ENCODE measurements at regions of chr4 and their contacts with region 1.

Region 1: DNA sequence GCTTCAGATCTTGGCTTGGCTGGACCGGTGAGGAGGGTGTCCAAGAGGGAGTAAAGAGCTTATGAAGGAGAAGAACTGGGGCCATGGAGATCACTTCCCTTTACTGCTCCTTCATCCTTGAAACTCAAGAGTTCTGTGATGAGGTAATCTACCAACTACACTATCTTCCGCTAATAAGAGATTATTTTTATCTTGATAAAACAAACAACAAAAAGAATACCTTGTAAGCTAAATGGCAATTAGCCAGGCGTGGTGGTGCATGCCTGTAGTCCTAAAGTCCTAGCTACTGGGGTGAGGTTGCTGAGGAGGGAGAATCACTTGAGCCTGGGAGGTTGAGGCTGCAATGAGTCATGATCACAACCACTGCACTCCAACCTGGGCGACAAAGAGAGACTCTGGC is 47.4 kb downstream of the HAUS3 start:
- DNase-seq: no peak
- H3K4me3 ChIP-seq: no peak overlapping the region
- H3K27ac ChIP-seq: no peak overlapping the region
- H3K4me1 ChIP-seq: no peaks in the 10 kb centered on the region
- H3K27me3 ChIP-seq: no peaks in the 10 kb centered on the region
- CTCF ChIP-seq: no peak

Region 2: GRCh38 chr4:1604711-1605205 is 589.7 kb before region 1 on chr4:
- intact Hi-C with region 1: no loop called
- DNase-seq: no peak
- H3K4me3 ChIP-seq: no peak overlapping the region
- H3K27ac ChIP-seq: no peak overlapping the region
- H3K4me1 ChIP-seq: no peaks in the 10 kb centered on the region
- H3K27me3 ChIP-seq: no peaks in the 10 kb centered on the region
- CTCF ChIP-seq: no peak

Region 3: DNA sequence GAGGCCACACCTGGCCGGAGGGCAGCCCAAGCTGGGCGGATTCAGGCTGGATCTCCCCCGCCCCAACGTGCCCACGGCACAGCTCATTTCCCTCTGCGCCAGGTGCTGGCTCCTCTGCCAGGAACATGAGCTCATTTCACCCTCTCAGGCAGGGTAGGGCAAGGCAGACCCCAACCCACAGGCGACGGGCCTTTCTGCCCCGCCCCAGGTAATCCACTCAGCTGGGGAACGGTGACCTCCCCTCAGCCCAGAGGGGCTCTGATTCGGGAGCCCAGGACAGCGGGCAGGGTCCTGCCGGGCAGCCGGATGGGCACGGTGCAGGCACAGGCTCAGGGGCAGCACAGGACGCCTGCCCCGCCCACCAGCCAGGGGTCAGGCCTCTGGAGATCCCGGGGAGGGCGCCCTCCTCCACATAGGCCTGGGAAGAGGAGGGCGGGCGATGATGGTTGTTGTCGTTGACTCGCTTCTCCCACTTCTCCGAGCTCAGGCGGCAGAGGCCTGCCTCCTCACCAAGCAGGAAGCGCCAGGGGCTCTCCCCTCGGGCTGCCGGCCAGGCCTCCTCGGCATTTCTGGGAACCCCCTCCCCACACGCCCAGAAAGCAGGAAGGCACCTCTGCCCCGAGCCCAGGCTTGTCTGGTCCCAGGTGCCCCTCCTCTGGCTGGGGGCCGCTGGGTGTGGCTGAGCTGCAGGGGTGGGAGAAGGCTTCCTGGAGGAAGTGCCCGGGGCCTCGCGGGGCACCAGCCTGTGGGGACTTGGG is 442.0 kb before region 1 on chr4:
- intact Hi-C with region 1: loop called (anchors 10 kb)
- DNase-seq: no peak
- H3K4me3 ChIP-seq: no peak overlapping the region
- H3K27ac ChIP-seq: no peak overlapping the region
- H3K4me1 ChIP-seq: peaks cover 13% of the 10 kb centered on the region
- H3K27me3 ChIP-seq: no peaks in the 10 kb centered on the region
- CTCF ChIP-seq: no peak

Region 4: GRCh38 chr4:1834047-1834775 is 360.3 kb before region 1 on chr4:
- intact Hi-C with region 1: loop called (anchors 10 kb)
- DNase-seq: no peak
- H3K4me3 ChIP-seq: no peak overlapping the region
- H3K27ac ChIP-seq: no peak overlapping the region
- H3K4me1 ChIP-seq: no peaks in the 10 kb centered on the region
- H3K27me3 ChIP-seq: no peaks in the 10 kb centered on the region
- CTCF ChIP-seq: no peak

Region 5: DNA sequence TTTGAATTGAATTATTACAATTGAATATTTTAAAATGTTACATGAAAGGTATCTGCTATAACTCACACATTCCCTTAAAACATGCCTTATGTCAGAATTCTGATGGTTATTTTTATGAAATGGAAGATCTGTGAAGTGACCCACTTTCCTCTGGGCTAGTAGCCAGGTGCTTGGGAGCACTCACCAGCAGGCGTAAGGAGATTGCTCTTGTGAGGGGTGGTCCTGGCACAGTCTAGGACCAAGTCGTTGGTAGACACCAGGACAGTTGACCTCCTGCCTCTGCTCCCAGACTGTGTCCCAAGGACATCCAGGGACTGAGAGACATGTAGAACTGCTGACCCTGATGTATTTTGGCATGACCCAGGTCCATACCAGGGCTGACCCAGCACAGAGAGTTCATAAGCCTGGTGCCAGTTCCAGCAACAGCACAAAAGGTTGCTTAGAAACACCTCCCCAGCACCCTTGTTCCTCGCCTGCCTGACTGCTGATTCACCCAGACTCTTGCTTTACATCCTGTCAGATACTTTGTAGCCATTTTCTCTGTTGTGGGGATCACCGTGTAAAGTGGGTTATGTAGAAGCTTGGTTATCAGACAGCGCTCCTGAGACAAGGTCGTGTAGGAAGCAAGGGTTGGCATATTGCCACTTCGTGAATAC is 234.2 kb before region 1 on chr4:
- intact Hi-C with region 1: no loop called
- DNase-seq: no peak
- H3K4me3 ChIP-seq: no peak overlapping the region
- H3K27ac ChIP-seq: no peak overlapping the region
- H3K4me1 ChIP-seq: no peaks in the 10 kb centered on the region
- H3K27me3 ChIP-seq: no peaks in the 10 kb centered on the region
- CTCF ChIP-seq: no peak

Region 6: GRCh38 chr4:2262143-2262943 is 67.8 kb after region 1 on chr4:
- intact Hi-C with region 1: no loop called
- DNase-seq: peak; percentile 98
- H3K4me3 ChIP-seq: peak overlapping the region; percentile 70
- H3K27ac ChIP-seq: peak overlapping the region; percentile 85
- H3K4me1 ChIP-seq: peaks cover 10% of the 10 kb centered on the region
- H3K27me3 ChIP-seq: no peaks in the 10 kb centered on the region
- CTCF ChIP-seq: no peak